CD4-positive, alpha-beta T cell (primary cell): ENCODE measurements at regions of chr15 and their contacts with region 1.

Region 1: GRCh38 chr15:48330855-48331795 is at the start of gene DUT:
- DNase-seq: peak; percentile 63 to 91 (median 78)
- ATAC-seq: peak; percentile 80
- H3K4me3 ChIP-seq: peak within 1 kb of the TSS; percentile 81
- H3K4me3 Mint-ChIP-seq: peak within 1 kb of the TSS; percentile 100
- H3K27ac ChIP-seq: peak within 1 kb of the TSS; percentile 88 to 90
- H3K27ac Mint-ChIP-seq: peak within 1 kb of the TSS; percentile 99
- H3K4me1 ChIP-seq: peaks cover 14% of the 10 kb centered on the region
- H3K4me1 Mint-ChIP-seq: peaks cover 28% of the 10 kb centered on the region
- H3K27me3 ChIP-seq: no peaks in the 10 kb centered on the region
- H3K27me3 Mint-ChIP-seq: no peaks in the 10 kb centered on the region
- CTCF ChIP-seq: no peak
- total RNA-seq, gene DUT: 60.7 to 65.3 TPM

Region 2: GRCh38 chr15:48177766-48178647 is 153.1 kb before region 1 on chr15 and contains the start of gene MYEF2:
- CTCF ChIA-PET with region 1: no interaction called
- POLR2A ChIA-PET with region 1: interaction called, 10 read pairs
- intact Hi-C with region 1: no loop called
- DNase-seq: peak; percentile 27 to 80 (median 56)
- ATAC-seq: peak; percentile 78
- H3K4me3 ChIP-seq: peak within 1 kb of the TSS; percentile 55
- H3K4me3 Mint-ChIP-seq: peak within 1 kb of the TSS; percentile 99
- H3K27ac ChIP-seq: no peak within 1 kb of the TSS
- H3K27ac Mint-ChIP-seq: peak within 1 kb of the TSS; percentile 87
- H3K4me1 ChIP-seq: peaks cover 3% of the 10 kb centered on the region
- H3K4me1 Mint-ChIP-seq: peaks cover 31% of the 10 kb centered on the region
- H3K27me3 ChIP-seq: peaks cover 5 to 7% of the 10 kb centered on the region in 2 experiments
- H3K27me3 Mint-ChIP-seq: peaks cover 14% of the 10 kb centered on the region
- CTCF ChIP-seq: no peak
- total RNA-seq, gene MYEF2: 19.3 to 24.7 TPM

Region 3: DNA sequence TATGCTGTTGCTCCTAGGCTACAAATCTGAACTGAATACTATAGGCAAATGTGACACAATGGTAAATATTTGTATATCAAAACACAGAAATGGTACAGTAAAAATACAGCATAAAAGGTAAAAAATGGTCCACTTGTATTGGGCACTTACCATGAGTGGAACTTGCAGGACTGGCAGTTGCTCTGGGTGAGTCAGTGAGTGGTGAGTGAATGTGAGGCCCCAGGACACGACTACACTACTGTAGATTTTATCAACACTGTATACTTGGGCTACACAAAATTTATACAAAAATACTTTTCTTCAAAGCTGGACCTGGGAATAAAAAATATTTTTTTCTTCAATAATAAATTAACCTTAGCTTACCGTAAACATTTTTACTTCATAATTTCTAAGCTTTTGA is 41.5 kb before region 1 on chr15:
- CTCF ChIA-PET with region 1: no interaction called
- POLR2A ChIA-PET with region 1: no interaction called
- intact Hi-C with region 1: no loop called
- DNase-seq: no peak
- ATAC-seq: no peak
- H3K4me3 ChIP-seq: no peak overlapping the region
- H3K4me3 Mint-ChIP-seq: no peak overlapping the region
- H3K27ac ChIP-seq: no peak overlapping the region
- H3K27ac Mint-ChIP-seq: no peak overlapping the region
- H3K4me1 ChIP-seq: peaks cover 3% of the 10 kb centered on the region
- H3K4me1 Mint-ChIP-seq: no peaks in the 10 kb centered on the region
- H3K27me3 ChIP-seq: peaks cover 0 to 4% of the 10 kb centered on the region in 2 experiments
- H3K27me3 Mint-ChIP-seq: peaks cover 7% of the 10 kb centered on the region
- CTCF ChIP-seq: no peak

Region 4: DNA sequence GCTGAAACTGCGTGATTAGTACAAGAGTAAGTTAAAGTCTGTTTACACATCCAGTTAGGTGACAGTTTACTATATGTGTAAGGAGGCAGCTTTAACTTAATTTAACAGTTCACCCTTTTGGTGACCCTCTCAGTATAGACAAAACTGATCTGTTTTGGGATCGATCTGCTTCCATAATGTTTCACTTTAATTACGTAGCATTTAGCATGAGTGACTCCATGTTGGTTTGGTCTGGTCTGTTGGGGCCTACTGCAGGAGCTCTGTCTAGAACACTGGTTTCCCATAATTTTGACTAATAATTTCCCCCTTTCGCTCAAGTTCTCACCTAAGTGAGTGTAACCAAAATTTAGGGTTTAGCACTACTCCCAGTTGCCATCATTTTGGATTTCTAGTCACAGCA is 721.5 kb after region 1 on chr15:
- CTCF ChIA-PET with region 1: no interaction called
- POLR2A ChIA-PET with region 1: no interaction called
- intact Hi-C with region 1: loop called in 1 of 2 experiments (anchors 5 kb)
- DNase-seq: no peak
- ATAC-seq: no peak
- H3K4me3 ChIP-seq: no peak overlapping the region
- H3K4me3 Mint-ChIP-seq: no peak overlapping the region
- H3K27ac ChIP-seq: no peak overlapping the region
- H3K27ac Mint-ChIP-seq: no peak overlapping the region
- H3K4me1 ChIP-seq: no peaks in the 10 kb centered on the region
- H3K4me1 Mint-ChIP-seq: no peaks in the 10 kb centered on the region
- H3K27me3 ChIP-seq: no peaks in the 10 kb centered on the region
- H3K27me3 Mint-ChIP-seq: no peaks in the 10 kb centered on the region
- CTCF ChIP-seq: no peak